Breast epithelium (tissue), 4 donors: ENCODE measurements at regions of chr20 and their contacts with region 1.

Region 1: DNA sequence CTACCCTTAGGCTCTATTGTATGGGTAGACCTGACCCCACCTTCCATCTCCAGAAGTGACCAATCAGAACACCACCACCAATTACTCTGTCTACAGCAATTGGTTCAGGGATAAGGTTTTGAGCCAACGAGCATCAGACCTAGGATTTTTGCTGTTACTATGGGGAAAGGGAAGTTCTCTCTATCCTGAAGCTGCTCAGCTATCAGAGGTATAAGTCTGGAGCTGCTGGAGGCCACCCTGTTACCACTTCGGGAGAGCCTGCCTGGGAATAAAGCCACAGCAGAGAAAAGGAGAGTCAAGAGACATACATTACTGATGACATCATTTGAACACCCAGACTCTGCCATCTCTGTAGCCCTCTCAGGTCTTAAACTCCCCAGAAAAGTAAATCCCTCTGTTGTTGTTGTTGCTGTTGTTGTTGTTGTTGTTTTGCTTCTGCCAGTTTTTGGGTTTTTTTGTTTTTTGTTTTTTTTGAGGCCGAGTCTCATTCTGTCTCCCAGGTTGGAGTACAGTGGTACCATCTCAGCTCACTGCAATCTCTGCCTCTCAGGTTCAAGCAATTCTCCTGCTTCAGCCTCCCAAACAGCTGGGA is 94.4 kb downstream of the PREX1 start:
- DNase-seq: no peak
- H3K4me3 ChIP-seq: no peak overlapping the region
- H3K27ac ChIP-seq: no peak overlapping the region
- H3K4me1 ChIP-seq: peaks cover 0 to 5% of the 10 kb centered on the region in 2 donors
- H3K27me3 ChIP-seq: no peaks in the 10 kb centered on the region
- CTCF ChIP-seq: no peak
- POLR2A ChIP-seq: no peak

Region 2: DNA sequence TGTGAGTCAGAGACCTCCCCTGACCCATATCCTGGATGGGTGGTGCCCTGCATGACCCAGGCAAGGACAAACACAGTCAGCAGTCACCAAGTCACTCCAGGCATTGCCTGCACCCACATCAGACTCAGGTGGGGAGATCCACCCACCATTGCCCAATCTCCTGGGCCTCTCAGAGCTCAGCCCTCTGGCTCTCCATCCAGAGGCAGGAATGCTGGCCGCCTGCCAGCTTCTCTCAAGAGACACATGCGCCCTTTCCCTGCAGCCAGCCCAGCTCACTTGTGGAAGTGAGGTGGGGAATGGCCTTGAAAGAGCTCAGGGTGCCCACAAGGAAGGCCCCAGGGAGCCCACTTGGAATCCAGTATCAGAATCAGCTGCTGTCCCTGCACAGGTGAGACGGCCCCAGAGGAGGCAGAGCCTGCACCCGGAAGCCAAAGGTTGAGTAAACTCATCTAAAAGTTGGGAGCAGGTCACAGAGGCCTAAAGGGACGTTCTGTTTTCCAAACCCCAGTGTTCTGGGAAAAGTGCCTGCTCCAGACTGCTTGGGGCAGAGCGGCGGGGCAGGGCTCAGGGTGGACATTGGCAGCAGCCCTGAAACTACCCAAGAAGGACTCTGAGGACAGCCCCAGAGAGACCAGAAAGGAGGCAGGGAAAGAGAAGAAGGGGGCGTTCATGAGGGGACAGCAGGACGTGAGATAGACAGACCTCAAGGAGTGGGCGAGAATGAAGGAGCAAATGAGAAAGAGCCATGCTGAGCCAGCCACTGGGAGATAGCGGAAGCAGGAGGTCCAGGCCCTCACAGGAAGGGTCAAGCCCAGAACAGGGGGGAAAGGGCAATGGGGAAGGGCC is 35.3 kb before region 1 on chr20:
- intact Hi-C with region 1: no loop called
- DNase-seq: peak; percentile 80 to 81
- H3K4me3 ChIP-seq: no peak overlapping the region
- H3K27ac ChIP-seq: peak overlapping the region; percentile 62 to 69
- H3K4me1 ChIP-seq: peaks cover 0 to 6% of the 10 kb centered on the region in 2 donors
- H3K27me3 ChIP-seq: no peaks in the 10 kb centered on the region
- CTCF ChIP-seq: no peak
- POLR2A ChIP-seq: no peak

Region 3: GRCh38 chr20:49054056-49054643 is 320.8 kb after region 1 on chr20:
- intact Hi-C with region 1: no loop called
- DNase-seq: no peak
- H3K4me3 ChIP-seq: no peak overlapping the region
- H3K27ac ChIP-seq: no peak overlapping the region
- H3K4me1 ChIP-seq: no peaks in the 10 kb centered on the region
- H3K27me3 ChIP-seq: no peaks in the 10 kb centered on the region
- CTCF ChIP-seq: no peak
- POLR2A ChIP-seq: no peak

Region 4: GRCh38 chr20:50061742-50062516 is 1328.5 kb after region 1 on chr20:
- intact Hi-C with region 1: loop called (anchors 5 kb)
- DNase-seq: no peak
- H3K4me3 ChIP-seq: no peak overlapping the region
- H3K27ac ChIP-seq: no peak overlapping the region
- H3K4me1 ChIP-seq: no peaks in the 10 kb centered on the region
- H3K27me3 ChIP-seq: no peaks in the 10 kb centered on the region
- CTCF ChIP-seq: no peak
- POLR2A ChIP-seq: no peak